ENCODE measurements at regions of chr1 and their contacts with region 1.

Region 1: GRCh38 chr1:9292361-9293240 is at the start of gene SPSB1:
- DNase-seq: peak; percentile 53 to 93 (median 81)

Region 2: DNA sequence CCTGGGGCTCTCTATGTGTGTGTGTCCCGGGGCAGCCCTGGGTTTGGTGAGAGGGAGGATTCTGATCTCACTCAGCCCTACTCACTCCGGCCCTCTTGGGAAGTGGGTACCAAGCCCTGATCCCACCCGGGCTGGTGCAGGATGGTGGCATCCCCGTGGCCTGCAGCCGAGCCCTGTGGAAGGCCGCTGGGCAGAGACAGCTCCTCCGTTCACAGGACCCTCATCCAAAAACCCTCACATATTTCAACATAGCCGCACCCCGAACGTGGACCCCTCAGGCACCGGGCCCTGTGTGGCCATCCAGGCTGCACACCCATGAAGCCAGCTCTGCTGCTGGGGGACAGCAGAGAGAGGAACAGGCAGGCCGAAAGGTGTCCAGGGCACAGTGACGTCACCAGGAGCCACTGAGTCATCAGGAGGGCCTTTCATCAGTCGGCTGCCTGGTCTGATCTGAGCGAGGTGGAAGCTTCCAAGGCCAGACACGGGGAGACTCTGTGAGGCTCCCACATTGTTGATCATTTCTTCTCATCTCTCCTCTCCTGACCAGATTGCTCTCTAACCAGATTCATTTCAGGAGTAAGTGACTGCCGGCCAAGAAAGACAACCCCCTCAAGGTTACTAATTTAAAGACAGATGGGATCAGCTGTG is 147.5 kb before region 1 on chr1:
- intact Hi-C with region 1: no loop called
- DNase-seq: no peak

Region 3: GRCh38 chr1:9455487-9456234 is 163.1 kb after region 1 on chr1:
- intact Hi-C with region 1: loop called (anchors 5 kb)
- DNase-seq: peak; percentile 59 to 94 (median 82)

Region 4: GRCh38 chr1:9494929-9495758 is 202.5 kb after region 1 on chr1:
- intact Hi-C with region 1: loop called (anchors 2 kb)
- DNase-seq: peak in 40 of 42 donors; percentile 15 to 82 (median 55)